Thyroid gland (tissue), 4 donors: ENCODE measurements at regions of chr3 and their contacts with region 1.

Region 1: GRCh38 chr3:168165390-168166269 is 69.9 kb upstream of the GOLIM4 start:
- DNase-seq: peak; percentile 52 to 67
- H3K4me3 ChIP-seq: no peak overlapping the region
- H3K27ac ChIP-seq: no peak overlapping the region
- H3K4me1 ChIP-seq: no peaks in the 10 kb centered on the region
- H3K27me3 ChIP-seq: no peaks in the 10 kb centered on the region
- CTCF ChIP-seq: peak; percentile 33 to 84 (median 76)
- POLR2A ChIP-seq: no peak

Region 2: GRCh38 chr3:168047190-168047795 is 118.3 kb before region 1 on chr3:
- intact Hi-C with region 1: loop called (anchors 2 kb)
- DNase-seq: no peak
- H3K4me3 ChIP-seq: no peak overlapping the region
- H3K27ac ChIP-seq: no peak overlapping the region
- H3K4me1 ChIP-seq: no peaks in the 10 kb centered on the region
- H3K27me3 ChIP-seq: no peaks in the 10 kb centered on the region
- CTCF ChIP-seq: peak; percentile 57 to 98 (median 79)
- POLR2A ChIP-seq: no peak